ENCODE measurements at regions of chr7 and their contacts with region 1.

Region 1: DNA sequence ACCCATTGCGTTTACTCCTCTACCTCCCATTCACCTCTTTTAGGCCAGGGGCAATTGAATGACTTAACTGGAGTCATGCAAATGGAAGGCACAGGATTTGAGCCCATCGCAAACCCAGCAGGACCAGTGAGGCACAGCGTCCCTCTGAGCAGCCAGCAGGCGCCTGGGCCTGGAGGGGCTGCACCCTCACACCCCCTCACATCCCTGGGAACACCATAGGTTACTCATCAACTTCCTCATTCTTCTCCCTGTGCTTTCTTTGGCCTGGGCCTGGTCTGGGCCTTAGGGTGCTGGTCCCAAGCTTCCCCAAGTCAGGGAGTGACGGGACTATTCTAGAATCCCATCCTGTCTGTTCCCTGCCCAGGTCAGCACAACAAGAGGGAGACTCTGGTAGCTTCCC is 169.4 kb upstream of the EEPD1 start:
- DNase-seq: no peak
- H3K4me3 ChIP-seq: no peak overlapping the region
- H3K27ac ChIP-seq: no peak overlapping the region
- H3K4me1 ChIP-seq: no peaks in the 10 kb centered on the region
- H3K27me3 ChIP-seq: no peaks in the 10 kb centered on the region
- CTCF ChIP-seq: no peak
- POLR2A ChIP-seq: no peak

Region 2: GRCh38 chr7:36287371-36288241 is 304.0 kb after region 1 on chr7:
- intact Hi-C with region 1: loop called (anchors 5 kb)
- DNase-seq: no peak
- H3K4me3 ChIP-seq: no peak overlapping the region
- H3K27ac ChIP-seq: peak overlapping the region; percentile 48 to 66
- H3K4me1 ChIP-seq: no peaks in the 10 kb centered on the region
- H3K27me3 ChIP-seq: no peaks in the 10 kb centered on the region
- CTCF ChIP-seq: no peak
- POLR2A ChIP-seq: no peak